ENCODE measurements at regions of chr17 and their contacts with region 1.

Region 1: DNA sequence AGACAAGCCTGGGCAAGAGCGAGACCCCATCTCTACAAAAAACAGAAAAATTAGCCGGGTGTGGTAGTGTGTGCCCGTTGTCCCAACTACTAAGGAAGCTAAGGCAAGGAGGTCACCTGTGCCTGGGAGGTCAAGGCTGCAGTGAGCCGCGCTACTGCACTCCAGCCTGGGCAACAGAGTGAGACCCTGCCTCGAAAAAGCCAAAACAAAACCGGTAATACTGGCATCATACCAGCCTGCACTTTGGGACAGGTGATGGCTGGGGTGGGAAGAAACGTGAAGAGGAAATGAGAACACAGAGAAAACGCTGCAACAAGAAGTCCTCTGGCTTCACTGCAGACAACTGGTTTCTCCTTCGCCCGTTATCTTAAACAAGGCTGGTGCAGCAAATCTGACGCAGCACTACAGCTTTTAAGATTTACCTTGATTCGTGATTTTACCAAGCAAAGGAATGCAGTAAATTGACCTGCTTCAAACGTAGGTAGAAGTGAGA is 725 bp upstream of the CASC3 start:
- DNase-seq: peak; percentile 16
- H3K4me3 Mint-ChIP-seq: peak overlapping the region; percentile 89
- H3K27ac Mint-ChIP-seq: peak overlapping the region; percentile 82
- H3K4me1 Mint-ChIP-seq: peaks cover 21% of the 10 kb centered on the region
- H3K27me3 Mint-ChIP-seq: no peaks in the 10 kb centered on the region

Region 2: GRCh38 chr17:40121181-40122135 is 18.2 kb before region 1 on chr17 and contains the start of gene MSL1:
- intact Hi-C with region 1: loop called (anchors 1 kb)
- DNase-seq: peak; percentile 84
- H3K4me3 Mint-ChIP-seq: peak within 1 kb of the TSS; percentile 84
- H3K27ac Mint-ChIP-seq: peak within 1 kb of the TSS; percentile 77
- H3K4me1 Mint-ChIP-seq: peaks cover 32% of the 10 kb centered on the region
- H3K27me3 Mint-ChIP-seq: no peaks in the 10 kb centered on the region
- total RNA-seq, gene MSL1: 87.6 and 95.8 TPM in 2 replicates

Region 3: GRCh38 chr17:40157973-40158372 is 18.4 kb after region 1 on chr17:
- intact Hi-C with region 1: loop called (anchors 1 kb)
- DNase-seq: no peak
- H3K4me3 Mint-ChIP-seq: no peak overlapping the region
- H3K27ac Mint-ChIP-seq: no peak overlapping the region
- H3K4me1 Mint-ChIP-seq: peaks cover 17% of the 10 kb centered on the region
- H3K27me3 Mint-ChIP-seq: no peaks in the 10 kb centered on the region

Region 4: GRCh38 chr17:40251576-40251975 is 112.0 kb after region 1 on chr17:
- intact Hi-C with region 1: no loop called
- DNase-seq: no peak
- H3K4me3 Mint-ChIP-seq: no peak overlapping the region
- H3K27ac Mint-ChIP-seq: no peak overlapping the region
- H3K4me1 Mint-ChIP-seq: peaks cover 5% of the 10 kb centered on the region
- H3K27me3 Mint-ChIP-seq: no peaks in the 10 kb centered on the region

Measured in activated T-helper 2 cell treated with anti-CD3 and anti-CD28 coated beads, Interferon-gamma antibody, Interleukin-2, Interleukin-4, amounts not matched to agents 10 μg/mL and 5 μg/mL and 100 μg/mL, durations not matched to agents 14 hours and 24 hours and 36 hours (primary cell).